PC-9 (cell line): ENCODE measurements at regions of chr9 and their contacts with region 1.

Region 1: GRCh38 chr9:111766066-111766465 is 28.7 kb downstream of the SHOC1 start:
- DNase-seq: no peak
- H3K4me3 ChIP-seq: no peak overlapping the region
- H3K27ac ChIP-seq: no peak overlapping the region
- H3K4me1 ChIP-seq: no peaks in the 10 kb centered on the region
- H3K27me3 ChIP-seq: no peaks in the 10 kb centered on the region
- CTCF ChIP-seq: no peak

Region 2: GRCh38 chr9:111839388-111839787 is 73.3 kb after region 1 on chr9:
- CTCF ChIA-PET with region 1: no interaction called
- POLR2A ChIA-PET with region 1: no interaction called
- intact Hi-C with region 1: loop called (anchors 5 kb)
- DNase-seq: no peak
- H3K4me3 ChIP-seq: no peak overlapping the region
- H3K27ac ChIP-seq: no peak overlapping the region
- H3K4me1 ChIP-seq: peaks cover 15% of the 10 kb centered on the region
- H3K27me3 ChIP-seq: no peaks in the 10 kb centered on the region
- CTCF ChIP-seq: no peak